PC-3 (cell line): ENCODE measurements at regions of chr1 and their contacts with region 1.

Region 1: GRCh38 chr1:197180252-197180878 is 33.9 kb upstream of the ASPM start:
- DNase-seq: peak; percentile 70
- ATAC-seq: peak; percentile 83
- H3K4me3 ChIP-seq: no peak overlapping the region
- H3K27ac ChIP-seq: no peak overlapping the region
- H3K4me1 ChIP-seq: no peaks in the 10 kb centered on the region; the same call in 1 of the 2 replicates
- H3K27me3 ChIP-seq: no peaks in the 10 kb centered on the region
- CTCF ChIP-seq: peak; percentile 74

Region 2: DNA sequence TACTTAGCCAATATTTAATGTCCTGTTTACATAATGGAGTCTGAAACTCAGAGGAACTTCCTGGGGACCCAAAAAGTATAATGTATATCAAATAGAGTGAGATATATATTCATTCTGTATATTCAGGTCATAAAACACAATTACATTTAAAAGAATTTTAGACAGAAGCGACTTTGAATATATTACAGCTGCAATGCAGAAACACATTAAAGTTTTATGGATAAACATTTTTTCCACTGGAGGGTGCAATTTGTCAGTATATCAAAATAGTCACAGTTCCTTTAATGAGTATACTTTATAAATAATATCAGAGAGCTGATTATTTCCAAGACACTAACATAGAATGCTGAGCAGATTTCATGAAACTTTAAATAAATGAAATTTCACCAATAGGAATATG is 43.8 kb after region 1 on chr1:
- CTCF ChIA-PET with region 1: interaction called, 4 read pairs
- POLR2A ChIA-PET with region 1: no interaction called
- intact Hi-C with region 1: loop called (anchors 2 kb)
- DNase-seq: peak; percentile 51
- ATAC-seq: no peak
- H3K4me3 ChIP-seq: no peak overlapping the region
- H3K27ac ChIP-seq: no peak overlapping the region
- H3K4me1 ChIP-seq: peaks cover 8% of the 10 kb centered on the region
- H3K27me3 ChIP-seq: no peaks in the 10 kb centered on the region
- CTCF ChIP-seq: peak; percentile 57

Region 3: DNA sequence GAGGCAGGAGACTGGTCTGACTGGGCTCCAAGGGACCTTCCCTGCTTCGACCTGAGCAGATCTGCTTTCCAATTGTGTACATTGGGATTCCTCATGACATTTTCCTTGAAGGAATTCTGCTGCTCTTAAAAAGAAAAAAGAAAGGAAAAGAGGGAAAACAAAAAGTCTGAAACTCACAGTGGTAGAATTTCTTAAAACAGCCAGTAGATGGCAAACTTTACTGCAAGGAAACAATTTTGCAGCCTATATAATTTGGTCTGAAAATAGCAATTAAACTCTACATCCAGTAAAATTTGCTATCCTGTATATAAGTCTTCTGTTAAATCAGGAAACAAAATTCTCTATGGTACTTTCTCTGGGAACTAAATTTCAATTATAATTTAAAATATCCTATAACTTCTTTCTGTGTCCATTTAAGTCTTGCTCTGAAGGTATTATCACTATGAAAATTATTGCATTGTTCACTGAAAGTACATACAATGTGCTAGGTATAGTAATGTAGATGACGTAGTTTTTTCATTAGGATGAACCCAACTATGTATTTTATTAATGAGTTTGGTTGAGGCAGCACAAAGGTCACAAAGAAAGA is 147.5 kb after region 1 on chr1:
- CTCF ChIA-PET with region 1: no interaction called
- POLR2A ChIA-PET with region 1: no interaction called
- intact Hi-C with region 1: loop called (anchors 2 kb)
- DNase-seq: peak; percentile 33
- ATAC-seq: peak; percentile 37; the same call in 1 of the 2 replicates
- H3K4me3 ChIP-seq: no peak overlapping the region
- H3K27ac ChIP-seq: no peak overlapping the region
- H3K4me1 ChIP-seq: no peaks in the 10 kb centered on the region
- H3K27me3 ChIP-seq: no peaks in the 10 kb centered on the region
- CTCF ChIP-seq: peak; percentile 69

Region 4: GRCh38 chr1:197339106-197340060 is 159.0 kb after region 1 on chr1:
- CTCF ChIA-PET with region 1: interaction called, 3 read pairs
- POLR2A ChIA-PET with region 1: no interaction called
- intact Hi-C with region 1: loop called (anchors 1 kb)
- DNase-seq: no peak
- ATAC-seq: no peak
- H3K4me3 ChIP-seq: no peak overlapping the region
- H3K27ac ChIP-seq: no peak overlapping the region
- H3K4me1 ChIP-seq: no peaks in the 10 kb centered on the region
- H3K27me3 ChIP-seq: no peaks in the 10 kb centered on the region
- CTCF ChIP-seq: no peak